ENCODE measurements at regions of chr13 and their contacts with region 1.

Region 1: GRCh38 chr13:61410669-61411297 is 4.9 kb downstream of the PCDH20 start:
- DNase-seq: peak; percentile 24
- H3K4me3 Mint-ChIP-seq: no peak overlapping the region
- H3K27ac Mint-ChIP-seq: no peak overlapping the region
- H3K4me1 Mint-ChIP-seq: peaks cover 9% of the 10 kb centered on the region
- H3K27me3 Mint-ChIP-seq: peaks cover 53% of the 10 kb centered on the region
- CTCF ChIP-seq: peak; percentile 43

Region 2: GRCh38 chr13:60627071-60627686 is 783.6 kb before region 1 on chr13:
- CTCF ChIA-PET with region 1: interaction called, 7 read pairs
- POLR2A ChIA-PET with region 1: no interaction called
- intact Hi-C with region 1: loop called (anchors 2 kb)
- DNase-seq: peak; percentile 58
- H3K4me3 Mint-ChIP-seq: no peak overlapping the region
- H3K27ac Mint-ChIP-seq: no peak overlapping the region
- H3K4me1 Mint-ChIP-seq: no peaks in the 10 kb centered on the region
- H3K27me3 Mint-ChIP-seq: peaks cover 97% of the 10 kb centered on the region
- CTCF ChIP-seq: peak; percentile 71

Region 3: DNA sequence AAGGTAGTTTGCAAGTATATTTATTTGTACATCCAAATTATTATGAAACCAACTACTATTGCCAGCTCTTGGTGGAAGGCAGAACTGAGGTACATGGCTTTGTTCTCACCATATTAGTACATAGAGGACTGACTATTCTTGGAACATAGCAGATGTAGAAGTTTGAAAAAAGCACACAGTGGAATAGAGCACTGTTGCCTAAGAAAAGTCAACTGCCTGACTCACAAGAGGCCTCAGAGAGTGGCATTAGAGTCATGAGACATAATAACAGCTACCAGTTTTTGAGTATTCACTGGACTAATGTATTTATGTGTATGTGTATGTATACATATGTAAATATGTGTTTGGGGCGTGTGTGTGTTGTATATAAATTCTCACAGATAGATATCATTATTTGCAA is 13.1 kb after region 1 on chr13:
- CTCF ChIA-PET with region 1: interaction called, 10 read pairs
- POLR2A ChIA-PET with region 1: no interaction called
- intact Hi-C with region 1: no loop called
- DNase-seq: no peak
- H3K4me3 Mint-ChIP-seq: no peak overlapping the region
- H3K27ac Mint-ChIP-seq: no peak overlapping the region
- H3K4me1 Mint-ChIP-seq: no peaks in the 10 kb centered on the region
- H3K27me3 Mint-ChIP-seq: no peaks in the 10 kb centered on the region
- CTCF ChIP-seq: no peak

Region 4: GRCh38 chr13:61685682-61686012 is 274.9 kb after region 1 on chr13:
- CTCF ChIA-PET with region 1: interaction called, 9 read pairs
- POLR2A ChIA-PET with region 1: no interaction called
- intact Hi-C with region 1: loop called (anchors 2 kb)
- DNase-seq: peak; percentile 46
- H3K4me3 Mint-ChIP-seq: no peak overlapping the region
- H3K27ac Mint-ChIP-seq: no peak overlapping the region
- H3K4me1 Mint-ChIP-seq: no peaks in the 10 kb centered on the region
- H3K27me3 Mint-ChIP-seq: no peaks in the 10 kb centered on the region
- CTCF ChIP-seq: peak; percentile 13

Measured in MCF 10A (cell line).